Panc1 (cell line): ENCODE measurements at regions of chr12 and their contacts with region 1.

Region 1: GRCh38 chr12:116053479-116054200 is 223.9 kb downstream of the MED13L start:
- DNase-seq: no peak
- ATAC-seq: no peak
- H3K4me3 ChIP-seq: no peak overlapping the region
- H3K27ac ChIP-seq: peak overlapping the region; percentile 76; the same call in 1 of the 2 replicates
- H3K4me1 ChIP-seq: peaks cover 47% of the 10 kb centered on the region
- H3K27me3 ChIP-seq: no peaks in the 10 kb centered on the region
- CTCF ChIP-seq: no peak

Region 2: DNA sequence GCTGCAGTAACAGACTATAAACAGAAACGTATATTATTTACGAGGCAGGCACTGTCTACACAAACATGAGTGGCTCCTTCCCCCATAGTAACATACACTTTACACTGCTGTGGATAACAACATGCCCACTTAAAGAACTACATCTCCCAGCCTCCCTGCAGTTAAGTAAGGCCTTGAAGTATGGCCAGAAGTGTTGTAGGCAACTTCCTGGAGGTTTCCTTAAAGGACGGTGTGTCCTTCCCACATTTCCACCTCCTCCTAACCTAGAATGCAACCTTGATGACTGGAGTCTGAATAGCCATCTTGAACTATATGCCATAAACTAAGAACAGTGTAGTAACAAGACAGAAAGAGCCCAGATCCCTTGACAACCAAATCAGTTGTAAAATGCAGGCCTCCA is 203.6 kb after region 1 on chr12:
- CTCF ChIA-PET with region 1: no interaction called
- POLR2A ChIA-PET with region 1: interaction called, 20 read pairs
- in situ Hi-C with region 1: no loop called
- intact Hi-C with region 1: no loop called
- DNase-seq: no peak
- ATAC-seq: peak; percentile 92
- H3K4me3 ChIP-seq: no peak overlapping the region
- H3K27ac ChIP-seq: peak overlapping the region; percentile 68; the same call in 1 of the 2 replicates
- H3K4me1 ChIP-seq: peaks cover 61% of the 10 kb centered on the region
- H3K27me3 ChIP-seq: no peaks in the 10 kb centered on the region
- CTCF ChIP-seq: no peak